PC-3 (cell line): ENCODE measurements at regions of chr15 and their contacts with region 1.

Region 1: DNA sequence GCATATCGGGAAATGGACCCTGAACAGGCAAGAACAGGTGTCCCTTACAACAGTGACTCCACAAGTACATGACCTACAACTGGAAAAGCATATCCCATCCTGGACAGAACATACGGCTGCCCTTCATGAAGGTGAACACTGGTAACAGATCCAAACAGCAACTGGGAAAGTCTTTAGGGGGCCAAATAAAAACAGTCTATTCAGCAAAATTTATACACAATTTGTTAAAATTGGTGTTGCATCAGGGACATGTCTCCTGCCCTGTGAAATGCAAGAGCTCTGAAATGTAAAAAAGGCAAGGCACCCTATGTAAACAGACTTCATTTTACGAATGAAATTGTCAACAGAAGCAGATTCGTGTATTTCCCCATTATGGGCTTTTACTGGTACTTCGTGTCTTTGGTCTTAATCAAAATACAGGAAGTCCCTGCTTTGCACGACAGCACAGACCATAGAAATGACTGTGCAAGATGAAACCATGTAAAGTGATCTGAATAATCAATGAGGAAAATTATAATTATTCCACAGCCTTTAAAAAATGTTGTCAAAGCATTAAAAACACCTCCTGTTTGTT is 127.3 kb upstream of the THBS1 start:
- DNase-seq: no peak
- ATAC-seq: no peak
- H3K4me3 ChIP-seq: no peak overlapping the region
- H3K27ac ChIP-seq: no peak overlapping the region
- H3K4me1 ChIP-seq: peaks cover 21% of the 10 kb centered on the region
- H3K27me3 ChIP-seq: no peaks in the 10 kb centered on the region
- CTCF ChIP-seq: no peak

Region 2: GRCh38 chr15:38699633-38700230 is 753.9 kb before region 1 on chr15:
- CTCF ChIA-PET with region 1: no interaction called
- POLR2A ChIA-PET with region 1: no interaction called
- intact Hi-C with region 1: loop called (anchors 10 kb)
- DNase-seq: peak; percentile 84
- ATAC-seq: peak; percentile 80
- H3K4me3 ChIP-seq: no peak overlapping the region
- H3K27ac ChIP-seq: no peak overlapping the region
- H3K4me1 ChIP-seq: no peaks in the 10 kb centered on the region
- H3K27me3 ChIP-seq: no peaks in the 10 kb centered on the region
- CTCF ChIP-seq: peak; percentile 96

Region 3: DNA sequence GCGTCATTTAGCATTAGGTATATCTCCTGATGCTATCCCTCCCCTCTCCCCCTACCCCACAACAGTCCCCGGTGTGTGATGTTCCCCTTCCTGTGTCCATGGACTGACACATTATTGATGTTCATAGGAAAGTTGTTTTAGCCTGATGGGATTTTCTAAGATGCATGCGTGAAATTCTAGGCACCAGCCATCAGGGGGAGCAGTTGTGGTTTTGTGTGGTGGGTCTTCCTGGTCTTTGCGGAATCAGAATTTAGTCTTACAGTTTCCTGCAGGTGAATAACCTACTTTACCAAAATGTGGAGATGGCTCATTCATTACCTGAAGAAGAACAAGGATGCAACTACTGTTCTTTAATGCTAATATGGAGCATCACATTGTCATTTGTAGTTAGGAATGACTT is 327.7 kb before region 1 on chr15:
- CTCF ChIA-PET with region 1: no interaction called
- POLR2A ChIA-PET with region 1: no interaction called
- intact Hi-C with region 1: no loop called
- DNase-seq: peak; percentile 78
- ATAC-seq: no peak
- H3K4me3 ChIP-seq: no peak overlapping the region
- H3K27ac ChIP-seq: peak overlapping the region; percentile 88
- H3K4me1 ChIP-seq: peaks cover 70% of the 10 kb centered on the region
- H3K27me3 ChIP-seq: no peaks in the 10 kb centered on the region
- CTCF ChIP-seq: peak; percentile 76

Region 4: DNA sequence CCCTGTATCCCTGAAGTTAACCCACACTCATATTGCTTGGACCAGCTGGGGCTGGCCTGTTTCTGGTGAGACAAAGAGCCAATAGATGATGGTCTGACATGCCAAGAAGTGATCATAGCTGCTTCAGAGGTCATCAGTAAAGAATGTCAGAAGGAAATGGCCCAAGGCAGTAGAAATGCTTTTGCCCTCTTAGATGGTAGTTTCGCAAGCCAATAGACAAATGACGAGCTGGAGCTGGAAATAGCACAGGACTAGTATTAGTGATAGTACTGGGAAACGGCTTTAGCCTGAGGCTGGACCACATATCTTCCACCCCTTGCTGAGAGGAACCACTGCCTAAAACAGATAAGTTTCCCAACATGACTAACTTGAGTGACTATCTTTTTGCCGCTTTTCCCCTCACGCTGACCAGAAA is 48.8 kb before region 1 on chr15:
- CTCF ChIA-PET with region 1: no interaction called
- POLR2A ChIA-PET with region 1: no interaction called
- intact Hi-C with region 1: no loop called
- DNase-seq: peak; percentile 92
- ATAC-seq: peak; percentile 64
- H3K4me3 ChIP-seq: no peak overlapping the region
- H3K27ac ChIP-seq: peak overlapping the region; percentile 67
- H3K4me1 ChIP-seq: peaks cover 30% of the 10 kb centered on the region
- H3K27me3 ChIP-seq: no peaks in the 10 kb centered on the region
- CTCF ChIP-seq: no peak